CD8-positive, alpha-beta T cell (primary cell): ENCODE measurements at regions of chr2 and their contacts with region 1.

Region 1: GRCh38 chr2:48600204-48600813 is 17.3 kb upstream of the GTF2A1L start:
- DNase-seq: peak in 2 of 9 experiments; percentile 9 to 14
- ATAC-seq: no peak
- H3K4me3 ChIP-seq: no peak overlapping the region
- H3K4me3 Mint-ChIP-seq: no peak overlapping the region
- H3K27ac ChIP-seq: no peak overlapping the region
- H3K27ac Mint-ChIP-seq: no peak overlapping the region
- H3K4me1 ChIP-seq: no peaks in the 10 kb centered on the region
- H3K4me1 Mint-ChIP-seq: no peaks in the 10 kb centered on the region
- H3K27me3 ChIP-seq: no peaks in the 10 kb centered on the region
- H3K27me3 Mint-ChIP-seq: peaks cover 3% of the 10 kb centered on the region
- CTCF ChIP-seq: peak; percentile 59

Region 2: GRCh38 chr2:48398285-48399002 is 201.9 kb before region 1 on chr2:
- CTCF ChIA-PET with region 1: no interaction called
- POLR2A ChIA-PET with region 1: no interaction called
- intact Hi-C with region 1: no loop called
- DNase-seq: no peak
- ATAC-seq: no peak
- H3K4me3 ChIP-seq: no peak overlapping the region
- H3K4me3 Mint-ChIP-seq: no peak overlapping the region
- H3K27ac ChIP-seq: no peak overlapping the region
- H3K27ac Mint-ChIP-seq: no peak overlapping the region
- H3K4me1 ChIP-seq: peaks cover 11% of the 10 kb centered on the region
- H3K4me1 Mint-ChIP-seq: peaks cover 10% of the 10 kb centered on the region
- H3K27me3 ChIP-seq: no peaks in the 10 kb centered on the region
- H3K27me3 Mint-ChIP-seq: no peaks in the 10 kb centered on the region
- CTCF ChIP-seq: no peak

Region 3: GRCh38 chr2:48668992-48669391 is 68.7 kb after region 1 on chr2:
- CTCF ChIA-PET with region 1: no interaction called
- POLR2A ChIA-PET with region 1: no interaction called
- intact Hi-C with region 1: no loop called
- DNase-seq: no peak
- ATAC-seq: no peak
- H3K4me3 ChIP-seq: no peak overlapping the region
- H3K4me3 Mint-ChIP-seq: no peak overlapping the region
- H3K27ac ChIP-seq: no peak overlapping the region
- H3K27ac Mint-ChIP-seq: no peak overlapping the region
- H3K4me1 ChIP-seq: no peaks in the 10 kb centered on the region
- H3K4me1 Mint-ChIP-seq: no peaks in the 10 kb centered on the region
- H3K27me3 ChIP-seq: no peaks in the 10 kb centered on the region
- H3K27me3 Mint-ChIP-seq: peaks cover 6% of the 10 kb centered on the region
- CTCF ChIP-seq: no peak

Region 4: DNA sequence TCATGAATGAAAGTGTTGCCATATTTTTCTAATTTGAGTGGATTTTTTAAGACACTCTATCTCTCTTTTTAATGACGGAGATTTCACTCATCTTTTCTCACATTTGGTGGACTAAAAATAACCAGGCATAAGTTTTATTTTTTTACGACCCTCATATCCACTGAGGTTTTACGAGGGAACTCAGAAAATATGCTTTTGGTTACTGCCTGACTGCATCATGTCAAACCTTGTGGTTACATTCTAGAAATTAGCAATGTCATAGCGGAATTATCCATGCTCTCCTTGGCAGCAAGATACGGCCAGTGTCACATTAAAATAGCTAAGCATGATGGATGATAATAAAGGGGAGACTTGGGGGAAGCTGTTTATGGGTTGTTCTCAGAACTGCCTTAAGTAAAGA is 982.6 kb after region 1 on chr2:
- CTCF ChIA-PET with region 1: no interaction called
- POLR2A ChIA-PET with region 1: no interaction called
- intact Hi-C with region 1: no loop called
- DNase-seq: no peak
- ATAC-seq: no peak
- H3K4me3 ChIP-seq: no peak overlapping the region
- H3K4me3 Mint-ChIP-seq: no peak overlapping the region
- H3K27ac ChIP-seq: no peak overlapping the region
- H3K27ac Mint-ChIP-seq: no peak overlapping the region
- H3K4me1 ChIP-seq: no peaks in the 10 kb centered on the region
- H3K4me1 Mint-ChIP-seq: no peaks in the 10 kb centered on the region
- H3K27me3 ChIP-seq: no peaks in the 10 kb centered on the region
- H3K27me3 Mint-ChIP-seq: no peaks in the 10 kb centered on the region
- CTCF ChIP-seq: no peak

Region 5: DNA sequence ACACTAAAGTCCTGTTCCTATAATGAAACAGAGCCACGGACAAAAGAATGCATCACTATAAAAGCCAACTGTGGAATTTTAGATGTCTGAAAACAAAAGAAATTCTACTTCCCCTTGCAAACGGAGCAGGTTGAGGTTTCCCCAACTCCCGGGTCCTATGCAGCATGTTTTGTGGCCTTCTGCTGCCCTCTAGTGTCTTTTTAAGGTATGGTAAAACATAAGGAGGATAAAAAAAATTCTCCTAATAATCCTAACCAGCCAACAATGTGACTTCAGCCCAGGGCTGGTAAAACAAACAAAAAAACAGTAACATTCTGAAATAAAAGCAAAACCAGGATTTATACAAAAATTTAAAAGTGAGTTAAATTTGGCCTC is 1892.2 kb after region 1 on chr2:
- CTCF ChIA-PET with region 1: no interaction called
- POLR2A ChIA-PET with region 1: no interaction called
- intact Hi-C with region 1: loop called (anchors 5 to 10 kb)
- DNase-seq: peak in 2 of 9 experiments; percentile 42 to 50
- ATAC-seq: no peak
- H3K4me3 ChIP-seq: no peak overlapping the region
- H3K4me3 Mint-ChIP-seq: no peak overlapping the region
- H3K27ac ChIP-seq: no peak overlapping the region
- H3K27ac Mint-ChIP-seq: no peak overlapping the region
- H3K4me1 ChIP-seq: no peaks in the 10 kb centered on the region
- H3K4me1 Mint-ChIP-seq: peaks cover 13% of the 10 kb centered on the region
- H3K27me3 ChIP-seq: no peaks in the 10 kb centered on the region
- H3K27me3 Mint-ChIP-seq: no peaks in the 10 kb centered on the region
- CTCF ChIP-seq: peak; percentile 46